Thyroid gland (tissue), 4 donors: ENCODE measurements at regions of chr13 and their contacts with region 1.

Region 1: GRCh38 chr13:23630349-23631093 is 60.3 kb downstream of the TNFRSF19 start:
- DNase-seq: no peak
- H3K4me3 ChIP-seq: no peak overlapping the region
- H3K27ac ChIP-seq: no peak overlapping the region
- H3K4me1 ChIP-seq: peaks cover 15 to 27% of the 10 kb centered on the region in 2 donors
- H3K27me3 ChIP-seq: no peaks in the 10 kb centered on the region
- CTCF ChIP-seq: no peak
- POLR2A ChIP-seq: no peak

Region 2: DNA sequence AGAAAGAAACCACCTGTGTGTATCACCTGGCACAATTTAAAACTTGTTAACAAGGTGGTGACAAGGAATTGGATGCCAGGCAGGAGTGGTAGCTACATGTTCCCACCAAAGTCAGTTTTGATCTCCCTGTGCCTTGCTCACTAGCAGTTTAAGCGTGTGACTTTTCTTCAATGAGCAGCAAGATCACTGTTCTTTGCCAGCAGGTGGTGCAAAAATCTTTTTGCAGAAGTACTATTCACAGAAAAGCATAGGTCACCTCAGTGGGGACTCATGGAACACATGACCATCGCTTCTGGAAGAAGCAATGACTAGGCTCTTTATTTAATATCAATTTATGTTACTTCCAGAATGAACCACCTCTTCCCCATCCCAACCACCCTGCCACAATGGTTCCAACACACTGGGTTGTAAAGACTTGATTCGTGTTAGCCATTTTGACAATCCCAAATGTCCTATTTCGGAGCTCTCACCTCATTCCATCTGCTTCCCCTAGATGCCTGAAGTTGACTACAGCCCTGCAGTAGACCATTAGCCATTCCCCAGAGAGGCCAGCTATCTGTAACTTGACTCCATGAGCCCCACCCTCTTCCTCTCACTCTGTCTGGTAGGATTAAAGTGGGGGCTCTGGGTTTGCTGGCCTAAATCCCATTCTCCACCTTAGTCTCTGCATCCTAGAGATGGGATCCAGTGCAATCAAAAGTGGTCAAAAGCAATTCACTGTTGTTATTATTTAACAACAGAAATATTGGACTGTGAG is 119.4 kb before region 1 on chr13:
- intact Hi-C with region 1: loop called (anchors 5 kb)
- DNase-seq: peak; percentile 6 to 8
- H3K4me3 ChIP-seq: no peak overlapping the region
- H3K27ac ChIP-seq: no peak overlapping the region
- H3K4me1 ChIP-seq: no peaks in the 10 kb centered on the region
- H3K27me3 ChIP-seq: no peaks in the 10 kb centered on the region
- CTCF ChIP-seq: peak in 4 of 6 experiments; percentile 27 to 49 (median 42)
- POLR2A ChIP-seq: no peak

Region 3: GRCh38 chr13:23799945-23800344 is 169.4 kb after region 1 on chr13:
- intact Hi-C with region 1: no loop called
- DNase-seq: no peak
- H3K4me3 ChIP-seq: no peak overlapping the region
- H3K27ac ChIP-seq: no peak overlapping the region
- H3K4me1 ChIP-seq: peaks cover 2 to 4% of the 10 kb centered on the region in 2 donors
- H3K27me3 ChIP-seq: no peaks in the 10 kb centered on the region
- CTCF ChIP-seq: no peak
- POLR2A ChIP-seq: no peak